ENCODE measurements at regions of chr5 and their contacts with region 1.

Region 1: GRCh38 chr5:177554474-177555111 is at the start of gene FAM193B:
- DNase-seq: peak; percentile 97
- H3K4me3 Mint-ChIP-seq: peak within 1 kb of the TSS; percentile 80
- H3K27ac Mint-ChIP-seq: peak within 1 kb of the TSS; percentile 66
- H3K4me1 Mint-ChIP-seq: peaks cover 24% of the 10 kb centered on the region
- H3K27me3 Mint-ChIP-seq: no peaks in the 10 kb centered on the region
- total RNA-seq, gene FAM193B: 87.4 to 87.8 TPM

Region 2: GRCh38 chr5:177351385-177352329 is 202.9 kb before region 1 on chr5 and contains the start of gene LMAN2:
- CTCF ChIA-PET with region 1: no interaction called
- intact Hi-C with region 1: no loop called
- DNase-seq: peak; percentile 96
- H3K4me3 Mint-ChIP-seq: peak within 1 kb of the TSS; percentile 95
- H3K27ac Mint-ChIP-seq: peak within 1 kb of the TSS; percentile 100
- H3K4me1 Mint-ChIP-seq: peaks cover 43% of the 10 kb centered on the region
- H3K27me3 Mint-ChIP-seq: no peaks in the 10 kb centered on the region
- total RNA-seq, gene LMAN2: 82.2 to 83.9 TPM

Region 3: DNA sequence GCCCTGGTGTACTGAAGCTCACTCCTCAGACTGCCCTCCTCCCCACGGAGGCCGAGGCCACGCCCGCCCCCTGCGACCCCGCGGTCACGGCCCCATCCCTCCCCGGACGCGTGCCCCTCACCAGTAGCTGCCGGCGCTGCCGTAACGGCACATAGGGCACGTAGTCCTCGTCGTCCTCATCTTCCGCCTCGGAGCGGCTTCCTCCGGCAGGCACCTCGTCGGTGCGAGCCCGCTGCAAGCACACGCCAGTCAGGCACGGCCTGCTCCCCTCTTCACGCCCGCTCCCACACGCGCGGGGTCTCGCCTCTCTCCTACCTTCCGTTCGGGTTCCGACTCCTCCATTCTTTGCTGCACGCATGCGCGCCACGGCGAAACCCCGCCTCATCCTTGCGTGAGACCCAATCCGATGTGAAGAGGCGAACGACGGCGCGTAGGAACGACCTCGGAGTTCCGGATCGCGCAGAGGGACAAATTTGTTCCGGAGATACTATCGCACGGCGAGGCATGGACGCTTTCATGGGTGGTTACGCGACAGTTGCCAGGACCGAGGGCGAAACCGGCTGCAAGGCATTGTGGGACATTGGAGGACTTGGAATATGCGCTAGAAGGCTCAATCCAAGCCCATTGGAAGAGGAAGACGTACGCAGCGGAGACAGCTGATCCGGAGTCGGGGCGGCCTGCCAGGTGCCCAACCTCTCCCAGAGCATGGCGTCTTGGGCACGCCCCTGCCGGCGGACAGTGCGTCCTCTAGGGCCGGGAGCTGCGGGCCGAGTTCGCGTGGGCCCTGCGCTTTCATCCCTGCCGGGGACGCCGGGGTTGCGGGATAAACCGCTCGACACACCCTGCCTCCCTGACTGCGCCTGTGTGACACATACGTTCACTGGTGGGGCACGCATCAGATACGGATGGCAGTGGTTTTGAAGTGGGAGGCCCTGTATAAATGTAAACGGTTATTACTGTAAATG is 37.7 kb before region 1 on chr5 and contains the start of gene DDX41:
- CTCF ChIA-PET with region 1: no interaction called
- intact Hi-C with region 1: loop called (anchors 1 kb)
- DNase-seq: peak; percentile 97
- H3K4me3 Mint-ChIP-seq: peak within 1 kb of the TSS; percentile 94
- H3K27ac Mint-ChIP-seq: peak within 1 kb of the TSS; percentile 87
- H3K4me1 Mint-ChIP-seq: peaks cover 54% of the 10 kb centered on the region
- H3K27me3 Mint-ChIP-seq: no peaks in the 10 kb centered on the region
- total RNA-seq, gene DDX41: 142 to 147 TPM

Region 4: DNA sequence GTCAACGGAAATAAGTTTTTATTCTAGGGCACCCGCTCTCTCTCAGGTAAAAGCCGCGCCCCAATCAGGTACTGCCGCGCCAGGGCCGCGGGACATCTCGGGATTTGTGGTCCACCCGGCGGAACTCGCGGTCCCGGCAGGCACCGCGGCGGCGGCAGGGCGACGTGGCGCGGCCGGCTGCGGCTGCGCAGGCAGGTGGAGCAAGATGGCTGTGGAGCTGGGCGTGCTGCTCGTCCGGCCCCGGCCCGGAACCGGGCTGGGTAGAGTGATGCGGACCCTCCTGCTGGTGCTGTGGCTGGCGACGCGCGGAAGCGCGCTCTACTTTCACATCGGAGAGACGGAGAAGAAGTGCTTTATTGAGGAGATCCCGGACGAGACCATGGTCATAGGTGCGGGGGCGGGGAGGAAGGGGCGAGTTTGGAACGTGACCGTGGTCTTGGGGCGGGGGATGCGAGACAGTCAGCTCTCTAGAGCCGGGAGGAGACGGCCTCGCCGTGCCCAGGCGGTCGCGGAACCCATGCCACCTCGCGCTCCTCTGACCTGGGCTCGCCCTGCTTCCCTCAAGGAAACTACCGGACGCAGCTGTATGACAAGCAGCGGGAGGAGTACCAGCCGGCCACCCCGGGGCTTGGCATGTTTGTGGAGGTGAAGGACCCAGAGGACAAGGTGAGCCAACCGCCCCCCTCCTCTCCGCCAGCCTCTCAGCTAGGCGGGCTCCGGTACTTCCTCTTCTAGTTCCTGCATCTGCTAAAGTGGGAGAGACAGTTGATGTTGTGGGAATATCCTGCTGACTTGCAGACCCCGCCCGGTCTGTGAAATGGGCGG is 37.6 kb after region 1 on chr5 and contains the start of gene TMED9:
- CTCF ChIA-PET with region 1: no interaction called
- intact Hi-C with region 1: loop called (anchors 1 kb)
- DNase-seq: peak; percentile 88
- H3K4me3 Mint-ChIP-seq: peak within 1 kb of the TSS; percentile 98
- H3K27ac Mint-ChIP-seq: peak within 1 kb of the TSS; percentile 94
- H3K4me1 Mint-ChIP-seq: peaks cover 35% of the 10 kb centered on the region
- H3K27me3 Mint-ChIP-seq: peaks cover 9% of the 10 kb centered on the region
- total RNA-seq, gene TMED9: 110 TPM

Measured in activated naive CD4-positive, alpha-beta T cell treated with anti-CD3 and anti-CD28 coated beads for 36 hours (primary cell).